Ovary (tissue), 10 donors: ENCODE measurements at regions of chr9 and their contacts with region 1.

Region 1: GRCh38 chr9:6566409-6567139 is 79.0 kb downstream of the GLDC start:
- DNase-seq: peak in 1 of 5 donors; percentile 22
- H3K4me3 ChIP-seq: no peak overlapping the region
- H3K27ac ChIP-seq: no peak overlapping the region
- H3K4me1 ChIP-seq: peaks cover 5% of the 10 kb centered on the region
- H3K27me3 ChIP-seq: no peaks in the 10 kb centered on the region
- CTCF ChIP-seq: no peak
- EP300 ChIP-seq: no peak
- POLR2A ChIP-seq: no peak

Region 2: DNA sequence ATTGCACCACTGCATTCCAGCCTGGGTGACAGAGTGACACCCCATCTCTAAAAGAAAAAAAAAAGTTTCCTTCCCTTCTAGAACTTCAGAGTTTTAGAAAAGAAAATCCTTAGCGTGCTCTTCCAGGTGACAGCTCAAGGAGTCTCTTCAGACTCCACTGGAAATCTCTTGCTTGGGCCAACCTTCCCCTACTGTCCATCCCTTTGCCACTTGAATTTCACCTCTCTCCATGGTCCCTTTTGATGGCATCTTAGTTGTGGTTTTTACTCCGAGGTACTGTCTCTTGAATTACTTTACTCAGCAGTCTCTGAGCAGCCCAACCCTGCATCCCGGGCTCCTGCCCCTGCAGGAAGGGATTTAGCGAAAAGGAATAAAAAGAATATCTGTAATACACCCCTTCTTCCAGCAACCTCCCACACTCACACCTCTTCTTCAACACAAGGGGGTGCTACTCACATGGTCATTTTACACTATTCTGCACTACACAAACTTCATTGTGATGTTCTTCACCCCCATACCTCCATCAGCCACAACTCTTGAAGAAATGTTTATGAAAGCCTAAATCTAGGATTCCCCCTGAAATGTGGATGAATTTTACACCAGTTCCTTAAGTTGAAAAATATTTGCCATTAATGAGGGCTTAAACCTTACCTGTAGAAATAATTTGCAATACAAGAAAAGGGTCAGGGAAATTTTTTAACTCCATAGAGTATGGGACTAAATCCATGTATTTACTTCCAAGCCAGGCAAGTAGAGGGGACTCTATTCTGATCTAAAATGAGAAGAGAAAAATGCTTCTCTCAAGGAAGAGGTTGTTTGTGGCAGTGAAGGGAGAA is 212.5 kb before region 1 on chr9:
- intact Hi-C with region 1: loop called in 1 of 4 experiments (anchors 10 kb)
- DNase-seq: no peak
- H3K4me3 ChIP-seq: no peak overlapping the region
- H3K27ac ChIP-seq: no peak overlapping the region
- H3K4me1 ChIP-seq: no peaks in the 10 kb centered on the region
- H3K27me3 ChIP-seq: no peaks in the 10 kb centered on the region
- CTCF ChIP-seq: peak in 2 of 3 donors; percentile 21 to 41
- EP300 ChIP-seq: no peak
- POLR2A ChIP-seq: no peak

Region 3: GRCh38 chr9:6367128-6367890 is 199.3 kb before region 1 on chr9:
- intact Hi-C with region 1: loop called in 1 of 4 experiments (anchors 5 kb)
- DNase-seq: no peak
- H3K4me3 ChIP-seq: no peak overlapping the region
- H3K27ac ChIP-seq: no peak overlapping the region
- H3K4me1 ChIP-seq: no peaks in the 10 kb centered on the region
- H3K27me3 ChIP-seq: no peaks in the 10 kb centered on the region
- CTCF ChIP-seq: no peak
- EP300 ChIP-seq: no peak
- POLR2A ChIP-seq: no peak